ENCODE measurements at regions of chr1 and their contacts with region 1.

Region 1: GRCh38 chr1:110630839-110631663 is 24.9 kb upstream of the KCNA2 start:
- DNase-seq: peak; percentile 85
- ATAC-seq: peak; percentile 41

Region 2: GRCh38 chr1:110581682-110582145 is 49.3 kb before region 1 on chr1:
- intact Hi-C with region 1: no loop called
- DNase-seq: no peak
- ATAC-seq: no peak

Region 3: DNA sequence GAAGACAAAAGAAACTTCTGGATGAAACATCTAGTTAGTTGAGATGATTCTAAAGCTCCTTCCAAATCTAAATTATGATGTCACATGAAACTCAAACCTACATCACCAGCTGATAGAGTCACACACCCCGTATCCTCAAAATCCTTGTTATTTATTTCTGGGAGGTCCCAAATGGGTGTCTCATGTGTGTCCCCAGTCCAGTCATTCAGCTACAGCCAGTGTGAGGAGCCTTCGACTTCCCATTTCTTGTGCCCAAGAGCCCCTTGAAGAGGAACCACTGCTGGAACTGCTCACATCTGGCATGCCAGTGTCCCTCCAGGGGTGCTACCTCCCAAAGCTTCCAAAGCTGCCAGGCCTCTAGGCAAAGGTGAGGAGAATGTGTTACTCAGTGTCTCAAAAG is 76.2 kb after region 1 on chr1:
- intact Hi-C with region 1: no loop called
- DNase-seq: no peak
- ATAC-seq: no peak

Region 4: DNA sequence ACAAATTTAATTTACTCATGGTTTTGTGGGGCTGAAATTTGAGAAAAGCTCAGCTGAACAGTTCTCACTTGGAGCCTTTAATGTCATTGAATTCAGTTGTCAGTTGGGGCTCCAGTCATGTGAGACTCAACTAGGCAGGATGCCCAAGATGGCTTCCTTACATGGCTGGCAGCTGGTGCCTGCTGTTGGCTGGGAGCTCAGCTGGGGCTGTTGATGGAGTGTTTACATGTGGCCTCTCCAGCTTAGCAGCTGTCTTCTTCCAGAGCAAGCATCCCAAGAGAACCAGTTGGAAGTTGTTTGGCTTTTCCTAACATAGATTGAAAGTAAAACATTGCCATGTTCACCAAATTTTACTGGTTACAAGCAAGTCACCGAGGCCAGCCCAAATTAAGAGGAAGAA is 125.5 kb after region 1 on chr1:
- intact Hi-C with region 1: loop called (anchors 1 kb)
- DNase-seq: peak; percentile 71
- ATAC-seq: peak; percentile 91

Region 5: GRCh38 chr1:110766025-110766647 is 135.1 kb after region 1 on chr1:
- intact Hi-C with region 1: loop called (anchors 1 kb)
- DNase-seq: no peak
- ATAC-seq: no peak